Mammary epithelial cell (primary cell): ENCODE measurements at regions of chr1 and their contacts with region 1.

Region 1: DNA sequence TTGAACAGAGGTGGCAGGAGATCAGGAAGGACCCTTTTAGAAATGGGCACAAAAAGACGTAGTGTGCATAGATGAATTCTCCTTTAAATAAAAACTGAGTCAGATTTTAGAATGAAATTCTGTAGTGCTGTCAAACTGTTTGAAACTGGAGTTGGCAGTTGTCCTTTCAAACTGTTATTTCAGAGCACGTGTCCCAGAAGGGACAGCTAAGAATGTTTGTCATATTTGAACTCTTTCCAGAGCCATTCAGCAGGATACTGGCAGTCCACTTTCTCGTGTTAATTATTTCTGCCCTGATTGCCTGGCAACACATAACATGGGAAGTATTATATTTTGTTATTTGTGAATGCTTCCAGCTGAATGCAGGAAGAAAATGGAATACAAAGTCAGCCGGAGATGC is 212.3 kb upstream of the DPYD start:
- DNase-seq: no peak
- H3K4me3 ChIP-seq: no peak overlapping the region
- H3K27ac ChIP-seq: no peak overlapping the region
- H3K4me1 ChIP-seq: no peaks in the 10 kb centered on the region
- H3K27me3 ChIP-seq: no peaks in the 10 kb centered on the region
- CTCF ChIP-seq: no peak

Region 2: GRCh38 chr1:97853221-97853620 is 279.9 kb before region 1 on chr1:
- CTCF ChIA-PET with region 1: no interaction called
- dilution Hi-C with region 1: no loop called
- in situ Hi-C with region 1: no loop called
- intact Hi-C with region 1: no loop called
- DNase-seq: no peak
- H3K4me3 ChIP-seq: no peak overlapping the region
- H3K27ac ChIP-seq: no peak overlapping the region
- H3K4me1 ChIP-seq: peaks cover 13% of the 10 kb centered on the region
- H3K27me3 ChIP-seq: no peaks in the 10 kb centered on the region
- CTCF ChIP-seq: no peak

Region 3: GRCh38 chr1:98277118-98277517 is 144.0 kb after region 1 on chr1:
- CTCF ChIA-PET with region 1: no interaction called
- dilution Hi-C with region 1: no loop called
- in situ Hi-C with region 1: no loop called
- intact Hi-C with region 1: loop called (anchors 10 kb)
- DNase-seq: peak; percentile 45
- H3K4me3 ChIP-seq: no peak overlapping the region
- H3K27ac ChIP-seq: no peak overlapping the region
- H3K4me1 ChIP-seq: no peaks in the 10 kb centered on the region
- H3K27me3 ChIP-seq: no peaks in the 10 kb centered on the region
- CTCF ChIP-seq: no peak

Region 4: GRCh38 chr1:98323906-98324358 is 190.8 kb after region 1 on chr1:
- CTCF ChIA-PET with region 1: no interaction called
- dilution Hi-C with region 1: no loop called
- in situ Hi-C with region 1: no loop called
- intact Hi-C with region 1: no loop called
- DNase-seq: peak; percentile 89
- H3K4me3 ChIP-seq: no peak overlapping the region
- H3K27ac ChIP-seq: peak overlapping the region; percentile 97
- H3K4me1 ChIP-seq: peaks cover 53% of the 10 kb centered on the region
- H3K27me3 ChIP-seq: no peaks in the 10 kb centered on the region
- CTCF ChIP-seq: no peak